T-cell (primary cell): ENCODE measurements at regions of chr22 and their contacts with region 1.

Region 1: DNA sequence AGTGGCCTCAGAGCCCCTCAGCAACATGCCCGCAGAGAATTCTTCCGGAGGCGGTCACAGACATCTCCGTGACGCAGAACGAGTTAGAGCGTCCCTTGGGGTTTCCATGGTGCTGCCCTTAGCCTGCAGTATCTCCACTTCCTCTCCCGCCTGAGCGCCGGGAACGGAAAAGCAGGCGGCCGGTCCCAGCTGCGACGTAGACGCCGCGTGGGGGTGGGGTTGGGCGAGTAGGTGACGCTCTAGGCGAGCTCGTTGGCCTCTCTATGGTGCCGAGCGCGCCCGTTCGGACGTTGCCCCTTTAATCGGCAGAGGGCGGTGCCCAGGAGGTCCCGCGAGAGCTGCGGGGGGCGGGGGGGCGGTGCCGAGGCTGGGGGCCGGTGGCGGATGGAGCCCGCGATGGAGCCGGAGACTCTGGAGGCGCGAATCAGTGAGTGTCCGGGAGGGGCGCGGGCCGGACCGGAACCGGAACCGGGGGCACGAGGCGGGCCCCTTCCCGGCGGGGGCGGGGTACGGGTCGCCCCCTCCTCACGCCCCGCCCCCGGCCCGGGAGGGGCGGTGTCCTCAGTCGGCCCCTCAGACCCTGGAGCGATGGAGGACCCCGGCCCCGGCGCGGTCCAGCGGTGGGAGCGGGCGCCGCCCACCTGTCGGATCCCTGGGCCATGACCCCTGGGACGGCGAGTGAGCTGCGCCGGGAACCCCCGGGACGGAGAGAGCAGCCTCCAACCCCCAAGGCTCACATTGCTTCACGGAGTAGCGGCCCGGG is at the start of gene GGA1:
- DNase-seq: peak; percentile 93 to 99 (median 96)
- ATAC-seq: peak; percentile 80 to 82 (median 82)
- H3K4me3 ChIP-seq: peak within 1 kb of the TSS; percentile 76 to 83
- H3K4me3 Mint-ChIP-seq: peak within 1 kb of the TSS; percentile 89 to 91 (median 89)
- H3K27ac ChIP-seq: peak within 1 kb of the TSS; percentile 99
- H3K27ac Mint-ChIP-seq: peak within 1 kb of the TSS; percentile 95 to 98
- H3K4me1 ChIP-seq: peaks cover 39 to 78% of the 10 kb centered on the region in 2 experiments
- H3K4me1 Mint-ChIP-seq: peaks cover 59 to 65% (median 60%) of the 10 kb centered on the region in 3 donors
- H3K27me3 ChIP-seq: no peaks in the 10 kb centered on the region
- H3K27me3 Mint-ChIP-seq: no peaks in the 10 kb centered on the region
- total RNA-seq, gene GGA1: 83.8 to 105 (median 97.7) TPM

Region 2: DNA sequence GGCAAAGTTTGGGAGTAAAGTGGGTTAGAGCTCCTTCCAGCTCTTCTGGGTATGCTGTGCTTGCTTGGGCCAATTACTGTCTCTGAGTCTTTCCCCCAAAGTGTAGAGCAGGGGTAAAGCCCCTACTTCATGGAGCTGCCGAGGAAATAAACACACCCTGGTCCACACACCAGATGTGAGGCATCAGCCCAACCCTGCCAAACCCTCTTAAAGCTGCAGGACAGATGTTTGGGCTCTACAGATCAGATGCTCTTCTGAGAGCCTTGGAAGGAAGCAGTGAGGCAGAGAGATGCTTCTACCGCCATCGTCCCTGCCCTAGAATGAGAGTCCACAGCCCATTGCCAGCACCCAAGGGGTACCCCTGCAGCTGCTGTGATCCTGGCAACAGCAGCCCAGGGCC is 246.0 kb before region 1 on chr22:
- CTCF ChIA-PET with region 1: no interaction called
- POLR2A ChIA-PET with region 1: no interaction called
- DNase-seq: no peak
- ATAC-seq: no peak
- H3K4me3 ChIP-seq: no peak overlapping the region
- H3K4me3 Mint-ChIP-seq: no peak overlapping the region
- H3K27ac ChIP-seq: no peak overlapping the region
- H3K27ac Mint-ChIP-seq: no peak overlapping the region
- H3K4me1 ChIP-seq: no peaks in the 10 kb centered on the region
- H3K4me1 Mint-ChIP-seq: peaks cover 2 to 6% (median 5%) of the 10 kb centered on the region in 3 donors
- H3K27me3 ChIP-seq: peaks cover 0 to 10% of the 10 kb centered on the region in 2 experiments
- H3K27me3 Mint-ChIP-seq: peaks cover 0 to 5% of the 10 kb centered on the region in 2 donors

Region 3: GRCh38 chr22:37566903-37567820 is 41.5 kb before region 1 on chr22:
- CTCF ChIA-PET with region 1: interaction called in 1 of 2 experiments, 10 read pairs
- POLR2A ChIA-PET with region 1: no interaction called
- DNase-seq: peak; percentile 68 to 93 (median 84)
- ATAC-seq: peak; percentile 87 to 93 (median 89)
- H3K4me3 ChIP-seq: peak overlapping the region in 1 of 2 donors; percentile 32
- H3K4me3 Mint-ChIP-seq: peak overlapping the region; percentile 41 to 70 (median 51)
- H3K27ac ChIP-seq: no peak overlapping the region
- H3K27ac Mint-ChIP-seq: peak overlapping the region; percentile 16 to 19
- H3K4me1 ChIP-seq: peaks cover 13 to 29% of the 10 kb centered on the region in 2 experiments
- H3K4me1 Mint-ChIP-seq: peaks cover 19 to 25% (median 24%) of the 10 kb centered on the region in 3 donors
- H3K27me3 ChIP-seq: peaks cover 0 to 65% of the 10 kb centered on the region in 2 experiments
- H3K27me3 Mint-ChIP-seq: peaks cover 6 to 25% of the 10 kb centered on the region in 2 donors

Region 4: DNA sequence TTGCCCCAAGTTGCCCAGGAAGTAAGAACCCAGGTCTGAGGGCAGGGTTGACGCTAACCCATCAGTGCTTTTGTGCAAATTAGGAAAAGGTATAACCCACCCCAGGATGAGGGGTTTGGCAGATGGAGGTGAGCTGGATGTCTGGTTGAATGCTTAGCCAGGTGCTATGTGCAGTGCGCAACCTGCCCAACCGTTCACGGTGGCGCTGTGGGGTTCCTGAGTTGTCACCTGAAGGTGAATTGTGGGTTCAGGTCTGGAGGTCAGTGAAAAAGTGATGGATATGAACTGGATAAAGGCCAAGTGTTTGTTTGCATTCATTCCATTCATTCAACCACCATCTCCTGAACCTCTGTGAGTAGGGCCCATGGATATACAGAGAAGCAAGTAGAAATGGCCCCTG is 14.4 kb before region 1 on chr22:
- CTCF ChIA-PET with region 1: interaction called in 1 of 2 experiments, 59 read pairs
- POLR2A ChIA-PET with region 1: interaction called, 3 to 6 read pairs
- DNase-seq: no peak
- ATAC-seq: no peak
- H3K4me3 ChIP-seq: no peak overlapping the region
- H3K4me3 Mint-ChIP-seq: no peak overlapping the region
- H3K27ac ChIP-seq: no peak overlapping the region
- H3K27ac Mint-ChIP-seq: no peak overlapping the region
- H3K4me1 ChIP-seq: peaks cover 0 to 6% of the 10 kb centered on the region in 2 experiments
- H3K4me1 Mint-ChIP-seq: peaks cover 12 to 13% (median 12%) of the 10 kb centered on the region in 3 donors
- H3K27me3 ChIP-seq: peaks cover 0 to 5% of the 10 kb centered on the region in 2 experiments
- H3K27me3 Mint-ChIP-seq: peaks cover 0 to 2% of the 10 kb centered on the region in 2 donors

Region 5: DNA sequence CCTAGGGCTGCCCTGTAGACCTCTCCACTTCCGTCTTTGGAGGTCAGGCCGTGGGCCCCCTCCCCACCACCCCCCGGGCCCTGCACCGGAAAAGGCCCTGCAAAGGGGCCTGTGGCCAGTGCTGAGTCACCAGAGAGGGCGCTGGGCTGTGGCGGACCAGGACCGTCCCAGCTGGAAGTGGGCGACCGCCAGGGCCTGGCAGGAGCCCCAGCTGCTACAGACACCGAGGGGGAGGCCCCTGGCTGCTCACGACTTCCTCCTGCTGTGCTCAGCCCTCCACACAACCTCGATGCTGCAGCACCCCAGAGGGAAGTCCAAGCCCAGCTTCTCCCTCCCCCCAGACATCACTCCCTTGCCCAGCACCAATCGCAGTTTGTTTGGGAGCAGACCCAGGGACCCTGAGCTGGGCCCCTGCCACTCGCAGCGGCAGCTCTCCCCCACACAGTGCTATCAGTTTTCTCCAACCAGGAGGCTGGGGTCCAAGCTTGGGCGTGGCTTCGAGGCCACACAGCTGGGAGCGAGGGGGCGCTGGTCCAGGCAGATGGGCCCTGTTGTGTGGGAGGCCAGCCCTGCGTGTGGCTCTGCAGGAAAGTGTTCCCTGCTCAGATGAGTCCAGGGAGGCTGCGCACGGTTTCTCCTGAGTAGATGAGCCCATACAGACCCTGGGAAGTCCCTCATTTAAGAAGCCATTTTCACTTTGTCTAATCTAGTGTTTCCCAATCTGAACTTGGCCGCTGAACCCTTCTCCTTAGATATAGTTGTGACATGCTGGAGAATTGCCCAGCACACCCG is 25.2 kb after region 1 on chr22:
- CTCF ChIA-PET with region 1: interaction called in 1 of 2 experiments, 10 read pairs
- POLR2A ChIA-PET with region 1: no interaction called
- DNase-seq: peak in 30 of 35 experiments; percentile 19 to 73 (median 48)
- ATAC-seq: peak; percentile 70 to 77 (median 72)
- H3K4me3 ChIP-seq: peak overlapping the region; percentile 32 to 35
- H3K4me3 Mint-ChIP-seq: peak overlapping the region; percentile 56 to 73 (median 61)
- H3K27ac ChIP-seq: peak overlapping the region; percentile 88
- H3K27ac Mint-ChIP-seq: peak overlapping the region; percentile 93 to 95
- H3K4me1 ChIP-seq: peaks cover 49 to 99% of the 10 kb centered on the region in 2 experiments
- H3K4me1 Mint-ChIP-seq: peaks cover 65 to 80% (median 66%) of the 10 kb centered on the region in 3 donors
- H3K27me3 ChIP-seq: no peaks in the 10 kb centered on the region
- H3K27me3 Mint-ChIP-seq: no peaks in the 10 kb centered on the region

Region 6: GRCh38 chr22:37676736-37677492 is 68.3 kb after region 1 on chr22:
- CTCF ChIA-PET with region 1: interaction called, 10 read pairs
- POLR2A ChIA-PET with region 1: interaction called, 5 to 6 read pairs
- DNase-seq: peak; percentile 88 to 96 (median 93)
- ATAC-seq: peak; percentile 86 to 90 (median 87)
- H3K4me3 ChIP-seq: peak overlapping the region; percentile 91 to 95
- H3K4me3 Mint-ChIP-seq: peak overlapping the region; percentile 87 to 97 (median 87)
- H3K27ac ChIP-seq: peak overlapping the region; percentile 96
- H3K27ac Mint-ChIP-seq: peak overlapping the region; percentile 95 to 98
- H3K4me1 ChIP-seq: peaks cover 27 to 76% of the 10 kb centered on the region in 2 experiments
- H3K4me1 Mint-ChIP-seq: peaks cover 48 to 66% (median 57%) of the 10 kb centered on the region in 3 donors
- H3K27me3 ChIP-seq: no peaks in the 10 kb centered on the region
- H3K27me3 Mint-ChIP-seq: no peaks in the 10 kb centered on the region

Region 7: GRCh38 chr22:37764622-37765021 is 156.0 kb after region 1 on chr22:
- CTCF ChIA-PET with region 1: no interaction called
- POLR2A ChIA-PET with region 1: interaction called in 1 of 2 experiments, 13 read pairs
- DNase-seq: no peak
- ATAC-seq: no peak
- H3K4me3 ChIP-seq: no peak overlapping the region
- H3K4me3 Mint-ChIP-seq: no peak overlapping the region
- H3K27ac ChIP-seq: no peak overlapping the region
- H3K27ac Mint-ChIP-seq: no peak overlapping the region
- H3K4me1 ChIP-seq: no peaks in the 10 kb centered on the region
- H3K4me1 Mint-ChIP-seq: no peaks in the 10 kb centered on the region
- H3K27me3 ChIP-seq: no peaks in the 10 kb centered on the region
- H3K27me3 Mint-ChIP-seq: no peaks in the 10 kb centered on the region

Region 8: GRCh38 chr22:37862570-37863325 is 254.1 kb after region 1 on chr22:
- CTCF ChIA-PET with region 1: interaction called in 1 of 2 experiments, 10 read pairs
- POLR2A ChIA-PET with region 1: no interaction called
- DNase-seq: no peak
- ATAC-seq: no peak
- H3K4me3 ChIP-seq: no peak overlapping the region
- H3K4me3 Mint-ChIP-seq: no peak overlapping the region
- H3K27ac ChIP-seq: no peak overlapping the region
- H3K27ac Mint-ChIP-seq: no peak overlapping the region
- H3K4me1 ChIP-seq: no peaks in the 10 kb centered on the region
- H3K4me1 Mint-ChIP-seq: peaks cover 3 to 14% (median 9%) of the 10 kb centered on the region in 3 donors
- H3K27me3 ChIP-seq: no peaks in the 10 kb centered on the region
- H3K27me3 Mint-ChIP-seq: no peaks in the 10 kb centered on the region